Activated CD4-positive, alpha-beta T cell treated with anti-CD3 and anti-CD28 coated beads, Interleukin-2, amount 10 ng/mL, durations not matched to agents 24 days and 14 days (primary cell): ENCODE measurements at regions of chr6 and their contacts with region 1.

Region 1: GRCh38 chr6:105077596-105078385 is 102.0 kb downstream of the POPDC3 start:
- DNase-seq: no peak
- H3K4me3 Mint-ChIP-seq: no peak overlapping the region
- H3K27ac Mint-ChIP-seq: no peak overlapping the region
- H3K4me1 Mint-ChIP-seq: no peaks in the 10 kb centered on the region
- H3K27me3 Mint-ChIP-seq: peaks cover 30% of the 10 kb centered on the region

Region 2: GRCh38 chr6:104682722-104683643 is 394.8 kb before region 1 on chr6:
- intact Hi-C with region 1: loop called (anchors 1 kb)
- DNase-seq: peak; percentile 91
- H3K4me3 Mint-ChIP-seq: no peak overlapping the region
- H3K27ac Mint-ChIP-seq: no peak overlapping the region
- H3K4me1 Mint-ChIP-seq: peaks cover 10% of the 10 kb centered on the region
- H3K27me3 Mint-ChIP-seq: no peaks in the 10 kb centered on the region

Region 3: DNA sequence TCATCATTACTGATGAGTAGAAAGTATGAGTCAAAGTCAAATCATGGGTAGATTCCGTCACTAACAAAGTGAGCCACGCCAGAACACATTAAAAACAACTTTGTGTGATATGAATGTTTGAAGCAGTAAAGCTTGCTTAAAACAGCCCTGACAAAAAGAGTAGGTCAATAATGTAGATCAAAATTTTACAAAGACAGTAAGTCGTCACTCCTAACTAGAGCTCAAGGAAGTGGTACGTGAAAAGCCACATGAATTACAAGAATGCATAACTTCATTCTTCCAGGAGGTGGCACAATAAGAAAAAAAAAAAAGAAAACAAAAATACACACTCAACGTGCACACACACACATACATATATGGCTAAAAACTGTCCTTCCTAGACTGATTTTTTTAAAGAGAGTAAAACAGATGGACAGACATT is 288.0 kb before region 1 on chr6:
- intact Hi-C with region 1: loop called (anchors 1 kb)
- DNase-seq: peak; percentile 66
- H3K4me3 Mint-ChIP-seq: peak overlapping the region; percentile 72
- H3K27ac Mint-ChIP-seq: peak overlapping the region; percentile 97
- H3K4me1 Mint-ChIP-seq: peaks cover 32% of the 10 kb centered on the region
- H3K27me3 Mint-ChIP-seq: no peaks in the 10 kb centered on the region

Region 4: DNA sequence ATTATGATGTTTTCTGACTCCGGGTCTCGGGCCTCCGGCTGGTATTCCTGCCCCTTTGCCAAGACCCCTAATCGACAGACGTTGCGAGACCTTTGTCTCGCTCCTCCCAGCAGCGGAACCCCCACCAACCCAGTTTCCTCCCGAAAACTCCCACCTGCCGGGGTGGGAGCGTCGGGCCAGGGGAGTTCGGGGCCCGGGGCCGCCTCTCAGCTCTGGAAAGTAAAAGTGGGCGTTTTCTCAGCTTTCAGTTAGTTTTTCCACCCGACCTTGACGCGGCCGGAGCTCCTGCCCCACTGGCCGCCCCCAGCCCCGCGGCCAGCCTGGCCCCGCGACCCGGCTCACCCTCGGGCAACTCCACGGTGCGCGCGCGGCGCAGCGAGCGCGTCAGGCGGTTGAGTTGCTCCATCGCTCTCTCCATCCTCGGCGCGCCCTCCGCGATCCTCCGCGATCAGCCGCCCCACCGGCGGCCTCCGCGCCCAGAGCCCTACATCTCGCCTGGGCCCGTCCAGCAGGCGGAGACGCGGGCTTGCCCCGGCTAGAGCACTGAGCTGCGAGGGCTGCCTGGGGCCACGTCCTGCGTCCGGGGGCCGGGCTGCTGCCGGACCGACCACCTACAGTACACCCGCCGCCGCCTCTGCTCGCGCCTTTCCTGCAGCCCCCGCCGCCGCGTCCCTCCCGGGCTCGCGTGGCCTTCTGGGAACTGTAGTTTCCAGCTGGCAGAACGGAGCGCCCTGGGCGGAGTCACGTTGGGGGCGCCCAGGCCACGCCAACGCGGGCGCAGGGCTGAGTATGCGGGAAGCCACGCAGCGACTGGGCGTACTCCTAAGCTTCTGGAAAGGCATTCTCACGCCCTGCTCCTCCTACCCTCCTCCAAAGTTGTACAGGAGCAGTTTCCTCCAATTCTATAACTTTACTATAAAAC is 218.3 kb before region 1 on chr6 and contains the start of gene HACE1:
- intact Hi-C with region 1: loop called (anchors 2 kb)
- DNase-seq: peak; percentile 97
- H3K4me3 Mint-ChIP-seq: peak within 1 kb of the TSS; percentile 98
- H3K27ac Mint-ChIP-seq: peak within 1 kb of the TSS; percentile 90
- H3K4me1 Mint-ChIP-seq: peaks cover 24% of the 10 kb centered on the region
- H3K27me3 Mint-ChIP-seq: no peaks in the 10 kb centered on the region
- total RNA-seq, gene HACE1: 18.6 and 21.3 TPM in 2 replicates

Region 5: GRCh38 chr6:104928141-104928540 is 149.7 kb before region 1 on chr6:
- intact Hi-C with region 1: no loop called
- DNase-seq: no peak
- H3K4me3 Mint-ChIP-seq: no peak overlapping the region
- H3K27ac Mint-ChIP-seq: no peak overlapping the region
- H3K4me1 Mint-ChIP-seq: no peaks in the 10 kb centered on the region
- H3K27me3 Mint-ChIP-seq: peaks cover 10% of the 10 kb centered on the region

Region 6: GRCh38 chr6:104940881-104941728 is 136.7 kb before region 1 on chr6:
- intact Hi-C with region 1: loop called (anchors 5 kb)
- DNase-seq: peak; percentile 80
- H3K4me3 Mint-ChIP-seq: peak overlapping the region; percentile 79
- H3K27ac Mint-ChIP-seq: no peak overlapping the region
- H3K4me1 Mint-ChIP-seq: peaks cover 2% of the 10 kb centered on the region
- H3K27me3 Mint-ChIP-seq: peaks cover 42% of the 10 kb centered on the region